HEK293T (cell line): ENCODE measurements at regions of chr4 and their contacts with region 1.

Region 1: DNA sequence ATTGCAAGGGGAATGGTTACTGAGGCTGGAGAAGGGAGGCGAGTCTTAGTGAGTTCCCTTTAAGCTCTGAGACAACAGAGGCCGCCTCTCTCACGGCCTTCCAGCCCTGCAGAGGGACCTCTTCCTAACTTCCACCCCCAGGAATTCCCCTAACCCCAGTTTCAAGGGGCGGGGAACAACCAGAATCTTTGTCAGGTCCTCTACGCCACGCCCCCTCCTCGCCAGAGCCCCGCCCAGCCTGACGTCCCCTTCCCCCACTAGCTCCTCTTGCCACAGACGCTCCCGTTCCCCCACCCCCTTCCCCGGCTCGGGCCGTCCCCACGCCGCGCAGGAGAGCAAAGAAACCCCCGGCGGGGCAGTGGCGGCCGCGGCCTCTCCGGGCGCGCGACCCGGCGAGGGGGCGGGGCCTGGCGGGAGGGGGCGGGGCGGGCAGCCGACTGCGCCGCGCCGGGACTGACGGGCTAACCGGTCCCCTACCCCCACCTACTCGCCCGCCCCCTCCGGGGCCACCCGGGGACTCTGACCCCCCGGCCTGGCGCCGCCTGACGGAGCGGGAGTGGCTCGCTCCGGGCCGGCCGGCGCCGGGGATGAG is 12.3 kb upstream of the TMEM156 start:
- DNase-seq: peak; percentile 78

Region 2: GRCh38 chr4:39054497-39054896 is 10.0 kb after region 1 on chr4:
- CTCF ChIA-PET with region 1: interaction called, 3 read pairs
- POLR2A ChIA-PET with region 1: interaction called, 10 read pairs
- DNase-seq: no peak